ENCODE measurements at regions of chr2 and their contacts with region 1.

Region 1: GRCh38 chr2:136378712-136379595 is 261.0 kb upstream of the CXCR4 start:
- DNase-seq: peak; percentile 86
- H3K4me3 ChIP-seq: peak overlapping the region in 1 of 8 donors; percentile 13
- H3K27ac ChIP-seq: peak overlapping the region in 4 of 8 donors; percentile 0 to 74 (median 64)
- H3K4me1 ChIP-seq: peaks cover 21 to 76% (median 56%) of the 10 kb centered on the region in 6 donors
- H3K27me3 ChIP-seq: no peaks in the 10 kb centered on the region
- CTCF ChIP-seq: peak; percentile 72 to 91 (median 87)
- POLR2A ChIP-seq: no peak

Region 2: GRCh38 chr2:134955788-134956187 is 1423.2 kb before region 1 on chr2:
- intact Hi-C with region 1: no loop called
- DNase-seq: no peak
- H3K4me3 ChIP-seq: no peak overlapping the region
- H3K27ac ChIP-seq: no peak overlapping the region
- H3K4me1 ChIP-seq: peaks cover 0 to 5% (median 0%) of the 10 kb centered on the region in 6 donors
- H3K27me3 ChIP-seq: no peaks in the 10 kb centered on the region
- CTCF ChIP-seq: no peak
- POLR2A ChIP-seq: no peak

Region 3: GRCh38 chr2:136117909-136118818 is 260.8 kb before region 1 on chr2 and contains the start of gene CXCR4:
- intact Hi-C with region 1: loop called (anchors 10 kb)
- DNase-seq: peak; percentile 98
- H3K4me3 ChIP-seq: peak within 1 kb of the TSS; percentile 64 to 89 (median 73)
- H3K27ac ChIP-seq: peak within 1 kb of the TSS; percentile 91 to 98 (median 94)
- H3K4me1 ChIP-seq: peaks cover 10 to 91% (median 75%) of the 10 kb centered on the region in 6 donors
- H3K27me3 ChIP-seq: peaks cover 0 to 11% (median 4%) of the 10 kb centered on the region in 7 donors
- CTCF ChIP-seq: peak in 2 of 11 experiments; percentile 8 to 17
- POLR2A ChIP-seq: peak; percentile 96 to 99 (median 99)
- total RNA-seq, gene CXCR4: 204 to 499 (median 323) TPM

Region 4: GRCh38 chr2:136327162-136327852 is 51.6 kb before region 1 on chr2:
- intact Hi-C with region 1: no loop called
- DNase-seq: no peak
- H3K4me3 ChIP-seq: peak overlapping the region in 1 of 8 donors; percentile 51
- H3K27ac ChIP-seq: peak overlapping the region; percentile 59 to 87 (median 73)
- H3K4me1 ChIP-seq: peaks cover 12 to 62% (median 43%) of the 10 kb centered on the region in 6 donors
- H3K27me3 ChIP-seq: no peaks in the 10 kb centered on the region
- CTCF ChIP-seq: no peak
- POLR2A ChIP-seq: no peak